CD8-positive, alpha-beta memory T cell (primary cell): ENCODE measurements at regions of chr7 and their contacts with region 1.

Region 1: DNA sequence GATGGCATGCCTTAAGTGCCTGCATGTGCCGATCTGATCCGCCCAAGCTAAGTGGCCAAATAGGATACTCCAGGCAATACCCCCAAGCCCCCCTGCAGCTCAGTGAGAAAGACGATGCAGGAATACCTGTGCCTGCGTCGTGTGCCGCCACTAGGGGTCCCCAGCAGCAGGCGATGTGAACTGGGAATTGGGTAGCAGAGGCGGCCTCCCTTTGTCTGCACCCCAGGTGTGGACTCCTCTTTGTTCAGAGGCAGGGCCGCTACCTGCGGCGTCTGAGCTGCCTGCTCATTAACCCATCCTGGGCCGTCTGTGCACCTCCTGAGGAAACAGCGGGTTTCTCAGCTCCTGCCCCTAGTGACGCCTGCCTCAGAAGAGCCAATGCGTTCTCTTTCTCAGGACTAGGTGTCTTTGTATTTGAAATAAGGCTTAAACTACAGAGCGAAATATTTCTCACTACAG is 4.8 kb upstream of the CHN2 start:
- DNase-seq: peak; percentile 31 to 80 (median 45)
- H3K4me3 ChIP-seq: no peak overlapping the region
- H3K4me3 Mint-ChIP-seq: peak overlapping the region in 2 of 7 donors; percentile 22 to 51
- H3K27ac ChIP-seq: no peak overlapping the region
- H3K27ac Mint-ChIP-seq: peak overlapping the region in 2 of 8 donors; percentile 23 to 63
- H3K4me1 ChIP-seq: no peaks in the 10 kb centered on the region
- H3K4me1 Mint-ChIP-seq: peaks cover 5 to 24% (median 10%) of the 10 kb centered on the region in 3 donors
- H3K27me3 ChIP-seq: no peaks in the 10 kb centered on the region
- H3K27me3 Mint-ChIP-seq: peaks cover 0 to 5% of the 10 kb centered on the region in 2 donors

Region 2: DNA sequence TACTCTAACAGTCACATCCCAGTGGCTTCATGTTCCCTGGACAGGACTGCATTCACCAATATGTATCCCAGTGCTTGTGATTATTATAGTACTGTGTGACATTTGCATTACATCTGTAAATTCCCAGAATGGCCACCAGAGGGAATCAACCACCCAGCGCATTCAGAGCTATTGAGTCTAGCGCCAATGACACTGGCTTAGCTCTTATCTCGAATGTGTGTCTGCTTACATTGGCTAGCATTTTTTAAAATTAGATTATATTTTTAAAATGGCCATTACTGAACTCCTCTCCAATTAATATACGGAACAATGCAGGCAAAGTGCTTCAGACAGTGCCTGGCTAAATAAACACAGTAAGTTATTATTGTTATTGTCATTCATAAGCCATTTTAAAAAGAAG is 267.9 kb before region 1 on chr7:
- CTCF ChIA-PET with region 1: interaction called, 10 read pairs
- POLR2A ChIA-PET with region 1: no interaction called
- DNase-seq: peak in 4 of 5 donors; percentile 10 to 50 (median 29)
- H3K4me3 ChIP-seq: no peak overlapping the region
- H3K4me3 Mint-ChIP-seq: no peak overlapping the region
- H3K27ac ChIP-seq: no peak overlapping the region
- H3K27ac Mint-ChIP-seq: peak overlapping the region in 1 of 8 donors; percentile 30
- H3K4me1 ChIP-seq: peaks cover 10% of the 10 kb centered on the region
- H3K4me1 Mint-ChIP-seq: peaks cover 20 to 23% (median 20%) of the 10 kb centered on the region in 3 donors
- H3K27me3 ChIP-seq: no peaks in the 10 kb centered on the region
- H3K27me3 Mint-ChIP-seq: peaks cover 0 to under 1% of the 10 kb centered on the region in 2 donors

Region 3: DNA sequence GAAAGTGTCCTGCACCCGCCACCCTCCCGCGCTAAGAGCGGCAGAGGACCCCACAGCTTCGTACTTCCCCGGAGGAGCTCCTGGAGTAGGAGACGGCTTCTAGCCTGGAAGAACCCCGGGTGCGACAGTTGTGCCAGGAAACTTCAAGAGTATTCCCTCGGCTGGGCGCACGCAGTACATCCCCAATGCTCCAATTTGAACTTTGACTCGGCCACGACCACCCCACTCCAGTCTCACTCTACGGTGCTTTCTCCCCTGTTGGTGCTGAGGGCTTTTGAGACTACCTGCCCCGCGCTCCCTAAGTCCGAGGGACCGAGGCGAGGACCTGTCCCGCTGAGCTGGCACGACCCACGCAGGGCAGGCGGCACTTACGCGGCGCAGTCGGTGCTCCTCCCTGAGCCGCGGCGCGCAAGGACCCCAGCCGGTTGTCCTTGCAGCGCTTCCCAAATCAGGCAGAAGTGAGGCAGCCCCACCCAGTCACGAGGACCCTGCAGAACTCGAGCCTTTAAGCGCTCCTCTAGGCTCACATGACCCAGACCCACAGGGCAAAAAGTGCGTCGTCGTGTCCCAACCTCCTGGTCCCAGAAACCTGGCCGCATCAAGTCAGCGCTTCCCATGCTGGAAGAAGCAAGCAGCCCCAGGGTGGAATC is 43.6 kb before region 1 on chr7 and contains the start of gene CPVL:
- CTCF ChIA-PET with region 1: no interaction called
- POLR2A ChIA-PET with region 1: no interaction called
- DNase-seq: no peak
- H3K4me3 ChIP-seq: no peak within 1 kb of the TSS
- H3K4me3 Mint-ChIP-seq: peak within 1 kb of the TSS in 3 of 7 donors; percentile 5 to 16 (median 8)
- H3K27ac ChIP-seq: peak within 1 kb of the TSS; percentile 24
- H3K27ac Mint-ChIP-seq: no peak within 1 kb of the TSS
- H3K4me1 ChIP-seq: no peaks in the 10 kb centered on the region
- H3K4me1 Mint-ChIP-seq: peaks cover 3 to 13% (median 12%) of the 10 kb centered on the region in 3 donors
- H3K27me3 ChIP-seq: peaks cover 3% of the 10 kb centered on the region
- H3K27me3 Mint-ChIP-seq: peaks cover 49 to 71% of the 10 kb centered on the region in 2 donors
- total RNA-seq, gene CPVL: 1.0 to 1.3 TPM

Region 4: DNA sequence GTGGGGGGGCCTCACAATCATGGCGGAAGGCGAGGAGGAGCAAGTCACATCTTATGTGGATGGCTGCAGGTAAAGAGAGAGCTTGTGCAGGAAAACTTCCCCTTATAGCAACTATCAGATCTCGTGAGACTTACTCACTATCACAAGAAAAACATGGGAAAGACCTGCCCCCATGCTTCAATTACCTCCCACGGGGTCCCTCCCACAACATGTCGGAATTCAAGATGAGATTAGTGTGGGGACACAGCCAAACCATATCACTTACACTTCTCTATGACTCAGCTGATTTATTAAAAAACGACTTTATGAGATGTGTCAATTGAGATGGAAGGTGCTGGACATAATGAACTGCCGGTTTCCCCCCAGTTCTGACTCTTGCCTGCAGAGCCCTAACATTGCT is 19.0 kb before region 1 on chr7:
- CTCF ChIA-PET with region 1: interaction called, 10 read pairs
- POLR2A ChIA-PET with region 1: no interaction called
- DNase-seq: no peak
- H3K4me3 ChIP-seq: no peak overlapping the region
- H3K4me3 Mint-ChIP-seq: no peak overlapping the region
- H3K27ac ChIP-seq: no peak overlapping the region
- H3K27ac Mint-ChIP-seq: no peak overlapping the region
- H3K4me1 ChIP-seq: no peaks in the 10 kb centered on the region
- H3K4me1 Mint-ChIP-seq: no peaks in the 10 kb centered on the region
- H3K27me3 ChIP-seq: no peaks in the 10 kb centered on the region
- H3K27me3 Mint-ChIP-seq: peaks cover 13 to 38% of the 10 kb centered on the region in 2 donors

Region 5: DNA sequence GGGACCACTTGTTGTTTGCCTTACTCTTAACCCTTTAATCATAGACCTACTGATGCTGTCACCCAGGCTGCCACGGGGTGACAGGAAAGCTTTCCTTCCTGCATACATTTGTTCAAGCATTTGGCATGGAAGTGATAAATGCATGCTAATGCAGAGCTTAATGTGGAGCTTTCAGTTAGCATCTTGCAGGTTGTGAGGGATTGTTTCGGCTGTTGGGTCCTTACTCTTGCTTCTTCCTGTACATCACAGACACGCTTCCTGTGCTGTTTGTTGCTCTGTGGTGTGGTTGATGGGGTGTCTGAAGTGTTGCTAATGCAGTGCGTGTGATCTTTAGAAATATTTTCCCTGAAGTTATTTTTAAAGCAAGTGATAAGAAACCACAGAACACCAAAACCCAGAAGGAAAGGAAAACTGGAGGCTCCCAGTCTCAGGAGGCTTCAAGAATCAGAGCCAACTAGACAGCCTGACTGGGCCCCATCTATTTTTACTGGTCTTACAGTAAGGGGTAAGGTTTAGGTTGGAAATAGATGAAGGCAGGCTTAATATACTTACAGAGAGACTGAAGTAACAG is 147.9 kb after region 1 on chr7:
- CTCF ChIA-PET with region 1: interaction called, 16 read pairs
- POLR2A ChIA-PET with region 1: no interaction called
- DNase-seq: peak; percentile 12 to 79 (median 59)
- H3K4me3 ChIP-seq: peak overlapping the region; percentile 26
- H3K4me3 Mint-ChIP-seq: peak overlapping the region; percentile 6 to 79 (median 74)
- H3K27ac ChIP-seq: peak overlapping the region; percentile 2
- H3K27ac Mint-ChIP-seq: peak overlapping the region; percentile 57 to 89 (median 70)
- H3K4me1 ChIP-seq: peaks cover 36% of the 10 kb centered on the region
- H3K4me1 Mint-ChIP-seq: peaks cover 45 to 55% (median 52%) of the 10 kb centered on the region in 3 donors
- H3K27me3 ChIP-seq: no peaks in the 10 kb centered on the region
- H3K27me3 Mint-ChIP-seq: peaks cover 0 to 3% of the 10 kb centered on the region in 2 donors

Region 6: DNA sequence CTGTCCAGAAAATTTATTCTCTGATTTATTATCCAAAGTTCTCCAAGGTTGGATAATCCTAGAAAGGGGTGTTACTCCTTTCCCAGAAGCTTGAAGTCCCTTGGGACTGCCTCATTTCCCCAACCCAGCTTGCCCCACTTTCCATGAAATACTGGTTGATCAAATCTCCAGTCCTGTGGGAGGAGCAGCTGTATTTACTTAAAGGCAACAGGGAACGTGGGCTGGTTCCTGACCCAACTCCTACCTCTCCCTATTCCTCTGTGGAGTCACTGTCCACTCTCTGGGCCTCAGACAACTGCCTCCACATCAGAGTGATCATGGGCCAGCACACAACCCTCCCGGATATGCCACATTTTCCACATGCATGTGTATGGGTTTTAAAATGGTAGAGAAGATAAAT is 207.6 kb after region 1 on chr7:
- CTCF ChIA-PET with region 1: interaction called, 13 read pairs
- POLR2A ChIA-PET with region 1: no interaction called
- DNase-seq: no peak
- H3K4me3 ChIP-seq: no peak overlapping the region
- H3K4me3 Mint-ChIP-seq: no peak overlapping the region
- H3K27ac ChIP-seq: no peak overlapping the region
- H3K27ac Mint-ChIP-seq: peak overlapping the region in 2 of 8 donors; percentile 15 to 60
- H3K4me1 ChIP-seq: no peaks in the 10 kb centered on the region
- H3K4me1 Mint-ChIP-seq: peaks cover 0 to 8% (median 0%) of the 10 kb centered on the region in 3 donors
- H3K27me3 ChIP-seq: no peaks in the 10 kb centered on the region
- H3K27me3 Mint-ChIP-seq: peaks cover 0 to 2% of the 10 kb centered on the region in 2 donors